Transverse colon (tissue), 4 donors: ENCODE measurements at regions of chr2 and their contacts with region 1.

Region 1: GRCh38 chr2:96907115-96908041 is 37.5 kb upstream of the SEMA4C start:
- DNase-seq: peak; percentile 63
- H3K4me3 ChIP-seq: no peak overlapping the region
- H3K27ac ChIP-seq: peak overlapping the region; percentile 84 to 91 (median 86)
- H3K4me1 ChIP-seq: peaks cover 16 to 48% (median 35%) of the 10 kb centered on the region in 4 donors
- H3K27me3 ChIP-seq: no peaks in the 10 kb centered on the region
- CTCF ChIP-seq: peak in 1 of 5 experiments; percentile 15
- EP300 ChIP-seq: peak; percentile 12
- POLR2A ChIP-seq: no peak

Region 2: DNA sequence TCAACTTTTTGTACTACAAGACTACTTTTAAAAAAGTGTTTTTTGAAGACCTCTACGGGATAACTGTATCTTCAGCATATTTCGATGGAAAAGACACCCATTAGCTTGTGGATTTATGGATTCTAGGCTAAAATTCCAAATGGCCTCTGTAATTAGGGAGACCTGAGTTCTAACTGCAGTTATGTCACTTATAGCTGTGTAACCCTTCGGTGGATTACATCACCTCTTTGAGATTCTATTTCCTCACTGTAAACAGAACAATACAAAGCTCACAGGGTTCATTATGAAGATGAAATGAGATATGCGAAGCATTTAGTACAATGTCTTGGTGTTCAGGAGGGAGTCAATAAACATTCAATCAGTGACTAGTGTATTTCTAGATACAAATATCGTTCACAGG is 191.7 kb before region 1 on chr2:
- in situ Hi-C with region 1: no loop called
- intact Hi-C with region 1: no loop called
- DNase-seq: no peak
- H3K4me3 ChIP-seq: no peak overlapping the region
- H3K27ac ChIP-seq: peak overlapping the region in 1 of 4 donors; percentile 74
- H3K4me1 ChIP-seq: peaks cover 0 to 18% (median 3%) of the 10 kb centered on the region in 4 donors
- H3K27me3 ChIP-seq: no peaks in the 10 kb centered on the region
- CTCF ChIP-seq: no peak
- EP300 ChIP-seq: no peak
- POLR2A ChIP-seq: no peak

Region 3: GRCh38 chr2:96760036-96760985 is 147.1 kb before region 1 on chr2 and contains the start of gene CNNM4:
- in situ Hi-C with region 1: no loop called
- intact Hi-C with region 1: no loop called
- DNase-seq: peak; percentile 97
- H3K4me3 ChIP-seq: peak within 1 kb of the TSS; percentile 53 to 85 (median 74)
- H3K27ac ChIP-seq: peak within 1 kb of the TSS; percentile 84 to 92 (median 88)
- H3K4me1 ChIP-seq: peaks cover 6 to 60% (median 43%) of the 10 kb centered on the region in 4 donors
- H3K27me3 ChIP-seq: no peaks in the 10 kb centered on the region
- CTCF ChIP-seq: peak in 3 of 5 experiments; percentile 4 to 40 (median 35)
- EP300 ChIP-seq: no peak
- POLR2A ChIP-seq: peak; percentile 10
- total RNA-seq, gene CNNM4: 66.5 to 134 (median 85.7) TPM

Region 4: GRCh38 chr2:96773922-96774321 is 133.5 kb before region 1 on chr2:
- in situ Hi-C with region 1: no loop called
- intact Hi-C with region 1: no loop called
- DNase-seq: no peak
- H3K4me3 ChIP-seq: peak overlapping the region in 2 of 4 donors; percentile 13 to 28
- H3K27ac ChIP-seq: peak overlapping the region; percentile 40 to 89 (median 52)
- H3K4me1 ChIP-seq: peaks cover 14 to 67% (median 45%) of the 10 kb centered on the region in 4 donors
- H3K27me3 ChIP-seq: no peaks in the 10 kb centered on the region
- CTCF ChIP-seq: no peak
- EP300 ChIP-seq: no peak
- POLR2A ChIP-seq: no peak

Region 5: DNA sequence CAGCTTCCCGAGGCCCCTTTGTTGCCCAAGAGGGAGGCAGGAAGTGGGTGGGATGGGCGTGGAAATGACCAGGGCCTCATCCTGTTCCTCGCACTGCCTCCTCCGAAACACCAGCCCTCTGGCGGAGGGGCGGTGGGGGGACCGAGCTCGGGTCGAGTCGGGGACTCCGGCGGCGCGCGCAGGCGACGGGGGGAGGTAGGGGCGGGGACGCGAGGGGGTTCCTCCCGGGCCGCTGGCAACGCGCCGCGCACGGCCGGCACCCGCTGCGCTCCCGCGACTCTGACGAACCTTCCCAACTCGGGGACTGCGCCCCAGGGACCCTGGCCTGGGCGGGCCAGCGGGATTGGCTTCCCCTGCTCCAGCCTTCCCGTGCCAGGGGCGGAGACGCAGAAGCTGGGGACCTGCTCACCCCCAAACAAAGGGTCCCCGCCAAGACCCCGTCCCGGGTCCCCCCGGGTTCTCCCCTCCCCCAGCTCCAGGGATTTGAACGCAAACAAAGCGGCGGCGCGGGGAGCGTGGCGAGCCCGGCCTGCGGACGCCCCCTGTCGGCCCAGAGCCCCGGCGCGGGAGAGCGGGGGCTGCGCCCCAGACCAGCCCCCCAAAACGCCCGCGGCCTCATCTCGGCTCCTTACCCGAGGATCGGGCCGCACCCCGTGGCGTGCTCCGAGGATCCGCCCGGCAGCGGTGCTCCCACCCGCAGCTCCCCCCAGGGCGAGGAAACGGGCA is 38.7 kb before region 1 on chr2:
- in situ Hi-C with region 1: no loop called
- intact Hi-C with region 1: loop called (anchors 1 kb)
- DNase-seq: peak; percentile 85
- H3K4me3 ChIP-seq: peak overlapping the region; percentile 73 to 79 (median 77)
- H3K27ac ChIP-seq: peak overlapping the region; percentile 94 to 100 (median 96)
- H3K4me1 ChIP-seq: peaks cover 24 to 45% (median 39%) of the 10 kb centered on the region in 4 donors
- H3K27me3 ChIP-seq: no peaks in the 10 kb centered on the region
- CTCF ChIP-seq: peak; percentile 55 to 66 (median 61)
- EP300 ChIP-seq: no peak
- POLR2A ChIP-seq: no peak

Region 6: GRCh38 chr2:96951093-96951654 is 43.8 kb after region 1 on chr2:
- in situ Hi-C with region 1: no loop called
- intact Hi-C with region 1: loop called (anchors 5 kb)
- DNase-seq: peak; percentile 77
- H3K4me3 ChIP-seq: no peak overlapping the region
- H3K27ac ChIP-seq: peak overlapping the region in 3 of 4 donors; percentile 36 to 87 (median 47)
- H3K4me1 ChIP-seq: peaks cover 33 to 53% (median 41%) of the 10 kb centered on the region in 4 donors
- H3K27me3 ChIP-seq: no peaks in the 10 kb centered on the region
- CTCF ChIP-seq: peak; percentile 86 to 95 (median 94)
- EP300 ChIP-seq: no peak
- POLR2A ChIP-seq: no peak

Region 7: DNA sequence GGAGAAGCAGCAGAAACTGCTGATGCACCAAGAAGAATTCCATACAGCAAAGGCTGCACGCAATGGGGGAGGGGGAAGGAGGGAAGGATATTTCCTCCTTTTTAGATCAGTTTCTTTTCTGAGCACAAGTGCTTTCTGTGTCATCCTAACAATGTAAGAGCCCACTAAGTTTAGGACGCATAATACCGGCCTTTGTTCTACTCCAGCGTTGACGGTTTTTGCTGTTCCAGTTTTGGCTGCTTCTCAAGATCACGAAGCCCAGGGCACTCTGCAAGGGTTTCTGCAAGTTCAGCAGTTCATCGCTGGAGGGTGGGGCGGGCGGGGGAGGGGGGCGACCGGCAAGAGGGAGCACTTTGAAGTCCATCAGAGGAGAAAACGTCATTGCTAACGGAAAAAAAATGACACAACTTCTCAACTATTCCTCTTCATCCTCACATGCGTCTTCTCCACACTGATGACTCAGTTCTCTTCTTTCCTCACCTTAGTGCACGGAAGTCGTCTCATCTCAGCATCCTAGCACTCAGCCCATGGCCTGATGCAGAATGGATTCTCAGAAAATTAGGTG is 70.3 kb after region 1 on chr2:
- in situ Hi-C with region 1: no loop called
- intact Hi-C with region 1: no loop called
- DNase-seq: no peak
- H3K4me3 ChIP-seq: peak overlapping the region in 1 of 4 donors; percentile 5
- H3K27ac ChIP-seq: no peak overlapping the region
- H3K4me1 ChIP-seq: peaks cover 0 to 13% (median 2%) of the 10 kb centered on the region in 4 donors
- H3K27me3 ChIP-seq: no peaks in the 10 kb centered on the region
- CTCF ChIP-seq: no peak
- EP300 ChIP-seq: no peak
- POLR2A ChIP-seq: no peak